CD4-positive, alpha-beta T cell (primary cell): ENCODE measurements at regions of chr15 and their contacts with region 1.

Region 1: GRCh38 chr15:81296673-81297072 is 27.3 kb downstream of the STARD5 start:
- DNase-seq: peak; percentile 57 to 93 (median 73)
- ATAC-seq: peak; percentile 45
- H3K4me3 ChIP-seq: peak overlapping the region; percentile 96
- H3K4me3 Mint-ChIP-seq: peak overlapping the region; percentile 99
- H3K27ac ChIP-seq: peak overlapping the region; percentile 94 to 95
- H3K27ac Mint-ChIP-seq: peak overlapping the region; percentile 92
- H3K4me1 ChIP-seq: peaks cover 73% of the 10 kb centered on the region
- H3K4me1 Mint-ChIP-seq: peaks cover 68% of the 10 kb centered on the region
- H3K27me3 ChIP-seq: no peaks in the 10 kb centered on the region
- H3K27me3 Mint-ChIP-seq: no peaks in the 10 kb centered on the region
- CTCF ChIP-seq: no peak

Region 2: DNA sequence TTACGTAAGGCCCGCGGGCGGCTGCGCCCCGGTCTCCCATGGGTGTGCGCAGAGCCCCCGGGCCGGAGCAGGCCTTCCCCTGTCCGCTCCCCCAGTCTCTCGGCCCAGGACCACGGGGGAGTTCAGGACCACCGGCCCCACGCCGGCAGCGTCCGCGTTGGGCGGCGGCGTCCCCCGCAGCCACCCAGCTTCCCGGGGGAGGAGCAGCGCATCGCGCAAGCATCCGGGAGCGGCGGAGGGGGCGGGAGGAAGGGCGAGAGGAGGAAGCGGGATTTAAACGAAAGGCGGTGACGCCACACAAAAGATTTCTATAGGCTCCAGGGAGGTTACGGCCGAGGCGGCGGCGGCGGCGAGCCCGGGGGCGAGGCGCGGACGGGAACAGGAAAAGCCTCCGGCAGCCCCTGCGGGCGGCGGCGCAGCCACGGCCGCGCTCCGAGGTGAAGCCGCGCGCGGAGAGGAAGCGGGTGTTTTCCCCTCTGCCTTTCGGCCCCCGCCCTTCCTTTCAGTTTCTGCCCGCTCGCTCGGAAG is 296.0 kb before region 1 on chr15 and contains the start of gene TLNRD1:
- CTCF ChIA-PET with region 1: no interaction called
- POLR2A ChIA-PET with region 1: interaction called, 11 read pairs
- intact Hi-C with region 1: loop called (anchors 10 kb)
- DNase-seq: peak; percentile 63 to 94 (median 76)
- ATAC-seq: peak; percentile 67
- H3K4me3 ChIP-seq: peak within 1 kb of the TSS; percentile 97
- H3K4me3 Mint-ChIP-seq: peak within 1 kb of the TSS; percentile 95
- H3K27ac ChIP-seq: peak within 1 kb of the TSS; percentile 94 to 96
- H3K27ac Mint-ChIP-seq: peak within 1 kb of the TSS; percentile 92
- H3K4me1 ChIP-seq: peaks cover 41% of the 10 kb centered on the region
- H3K4me1 Mint-ChIP-seq: peaks cover 62% of the 10 kb centered on the region
- H3K27me3 ChIP-seq: no peaks in the 10 kb centered on the region
- H3K27me3 Mint-ChIP-seq: no peaks in the 10 kb centered on the region
- CTCF ChIP-seq: no peak
- total RNA-seq, gene TLNRD1: 10.5 to 12.3 TPM

Region 3: DNA sequence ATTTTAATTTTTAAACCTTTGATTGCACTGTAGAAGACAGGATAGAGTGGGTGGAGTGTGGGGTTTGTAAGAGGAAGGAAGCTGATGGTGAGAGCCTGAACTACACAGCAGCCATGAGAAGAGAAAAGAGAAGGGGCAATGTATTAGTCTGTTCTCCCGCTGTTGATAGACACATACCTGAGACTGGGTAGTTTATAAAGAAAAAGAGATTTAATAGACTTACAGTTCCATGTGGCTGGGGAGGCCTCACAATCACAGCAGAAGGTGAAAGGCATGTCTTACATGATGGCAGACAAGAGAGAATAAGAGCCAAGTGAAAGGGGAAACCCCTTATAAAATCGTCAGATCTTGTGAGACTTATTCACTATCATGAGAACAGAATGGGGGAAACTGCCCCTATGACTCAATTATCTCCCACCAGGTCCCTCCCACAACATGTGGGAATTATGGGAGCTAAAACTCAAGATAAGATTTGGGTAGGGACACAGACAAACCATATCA is 10.0 kb before region 1 on chr15:
- CTCF ChIA-PET with region 1: interaction called, 4 read pairs
- POLR2A ChIA-PET with region 1: interaction called, 472 read pairs
- intact Hi-C with region 1: loop called (anchors 1 to 2 kb)
- DNase-seq: peak in 3 of 14 experiments; percentile 65 to 68 (median 68)
- ATAC-seq: peak; percentile 94
- H3K4me3 ChIP-seq: peak overlapping the region; percentile 5
- H3K4me3 Mint-ChIP-seq: peak overlapping the region; percentile 45
- H3K27ac ChIP-seq: peak overlapping the region; percentile 80 to 84
- H3K27ac Mint-ChIP-seq: peak overlapping the region; percentile 92
- H3K4me1 ChIP-seq: peaks cover 71% of the 10 kb centered on the region
- H3K4me1 Mint-ChIP-seq: peaks cover 79% of the 10 kb centered on the region
- H3K27me3 ChIP-seq: no peaks in the 10 kb centered on the region
- H3K27me3 Mint-ChIP-seq: no peaks in the 10 kb centered on the region
- CTCF ChIP-seq: no peak